ENCODE measurements at regions of chr12 and their contacts with region 1.

Region 1: DNA sequence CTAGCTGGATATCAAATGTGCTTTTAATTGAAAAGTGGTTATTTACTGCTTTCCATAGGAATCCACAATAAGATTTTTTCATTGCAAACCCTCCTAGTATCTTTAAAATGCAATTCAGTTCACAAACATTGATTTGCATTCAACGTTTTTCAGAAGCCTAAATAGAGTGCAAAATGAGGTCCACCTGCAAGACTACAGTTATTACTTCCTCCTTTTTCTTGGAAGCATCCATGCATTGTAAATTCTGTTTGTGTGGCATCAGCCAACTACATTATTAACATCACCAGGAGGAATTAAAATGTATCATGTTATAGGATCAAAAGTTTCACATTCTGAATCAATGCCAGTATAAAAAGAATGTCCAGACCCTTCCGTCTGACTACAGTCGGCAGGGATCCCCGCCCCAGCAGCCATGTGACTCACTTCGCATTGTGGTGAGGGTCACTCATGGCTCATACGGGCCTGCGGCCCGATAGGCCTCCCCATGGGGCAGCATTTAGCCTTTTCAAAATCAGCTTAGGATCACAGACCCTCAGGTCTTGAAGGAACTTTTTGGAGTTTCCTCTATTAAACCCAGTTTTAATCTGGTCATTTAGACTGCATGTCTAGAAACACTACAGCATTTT is 46.3 kb downstream of the NTF3 start:
- DNase-seq: no peak

Region 2: GRCh38 chr12:5461966-5462365 is 16.2 kb before region 1 on chr12:
- intact Hi-C with region 1: loop called in 1 of 2 experiments (anchors 1 kb)
- DNase-seq: no peak

Region 3: GRCh38 chr12:5522432-5523335 is 44.5 kb after region 1 on chr12:
- intact Hi-C with region 1: no loop called
- DNase-seq: no peak

Measured in posterior vena cava (tissue), 2 donors.